ENCODE measurements at regions of chr9 and their contacts with region 1.

Region 1: DNA sequence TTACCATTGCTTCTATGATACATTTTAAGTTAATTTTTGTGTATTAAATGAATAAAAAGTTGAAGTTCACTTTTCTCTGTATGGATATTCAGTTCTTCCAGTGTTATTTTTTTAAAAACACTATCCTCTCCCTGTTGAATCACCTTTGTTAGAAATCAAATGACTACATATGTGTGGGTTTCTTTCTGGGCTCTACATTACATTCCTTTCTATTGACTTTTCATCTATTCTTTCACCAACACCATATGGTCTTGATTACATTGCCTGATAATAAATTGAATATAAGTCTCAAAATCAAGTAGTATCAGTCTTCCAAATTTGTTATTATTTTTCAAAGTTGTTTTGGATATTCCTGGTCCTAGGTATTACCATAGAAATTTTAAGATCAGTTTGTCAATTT is 7.3 kb upstream of the RASEF start:
- DNase-seq: no peak
- H3K4me3 ChIP-seq: no peak overlapping the region
- H3K27ac ChIP-seq: no peak overlapping the region
- H3K4me1 ChIP-seq: no peaks in the 10 kb centered on the region
- H3K27me3 ChIP-seq: no peaks in the 10 kb centered on the region
- CTCF ChIP-seq: no peak
- EP300 ChIP-seq: no peak
- POLR2A ChIP-seq: no peak

Region 2: GRCh38 chr9:82721593-82721992 is 348.7 kb before region 1 on chr9:
- in situ Hi-C with region 1: no loop called
- intact Hi-C with region 1: loop called (anchors 10 kb)
- DNase-seq: no peak
- H3K4me3 ChIP-seq: no peak overlapping the region
- H3K27ac ChIP-seq: no peak overlapping the region
- H3K4me1 ChIP-seq: no peaks in the 10 kb centered on the region
- H3K27me3 ChIP-seq: no peaks in the 10 kb centered on the region
- CTCF ChIP-seq: no peak
- EP300 ChIP-seq: no peak
- POLR2A ChIP-seq: no peak

Region 3: DNA sequence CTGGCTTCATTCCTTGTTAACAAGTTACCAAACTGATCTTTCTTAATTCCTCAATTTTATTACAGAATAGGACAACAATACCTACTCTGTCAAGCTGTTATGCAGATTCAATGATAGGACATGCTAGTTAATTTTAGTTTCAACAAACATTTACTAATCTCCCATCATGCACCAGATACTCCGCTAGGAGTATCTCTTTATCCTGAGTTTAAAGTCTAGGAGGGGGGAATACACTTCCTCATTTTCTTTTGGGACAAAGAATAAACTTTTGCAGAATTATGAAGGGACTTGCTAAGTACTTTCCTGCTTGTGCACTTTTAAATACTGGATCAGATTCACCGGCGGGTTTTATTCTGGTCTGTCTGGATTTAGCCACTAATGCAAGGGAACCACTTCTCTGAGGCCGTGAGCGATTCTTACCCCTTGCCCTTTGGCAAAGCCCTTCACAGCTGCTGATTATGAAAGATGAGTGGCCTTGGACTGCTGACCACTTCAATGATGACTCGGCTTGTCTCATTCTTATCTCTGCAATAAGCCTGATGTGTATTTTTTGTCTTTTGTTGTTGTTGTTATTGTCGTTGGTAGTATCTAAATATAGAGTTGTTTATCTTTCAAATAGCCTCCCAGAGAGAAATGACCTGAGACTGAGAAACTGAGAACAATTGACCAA is 984.2 kb after region 1 on chr9:
- in situ Hi-C with region 1: no loop called
- intact Hi-C with region 1: no loop called
- DNase-seq: no peak
- H3K4me3 ChIP-seq: no peak overlapping the region
- H3K27ac ChIP-seq: no peak overlapping the region
- H3K4me1 ChIP-seq: no peaks in the 10 kb centered on the region
- H3K27me3 ChIP-seq: no peaks in the 10 kb centered on the region
- CTCF ChIP-seq: no peak
- EP300 ChIP-seq: no peak
- POLR2A ChIP-seq: no peak

Measured in transverse colon (tissue), 4 donors.